ENCODE measurements at regions of chr13 and their contacts with region 1.

Region 1: GRCh38 chr13:75771818-75772217 is 135.7 kb downstream of the LMO7 start:
- DNase-seq: no peak
- ATAC-seq: no peak
- H3K4me3 ChIP-seq: no peak overlapping the region
- H3K4me3 Mint-ChIP-seq: no peak overlapping the region
- H3K27ac ChIP-seq: no peak overlapping the region
- H3K27ac Mint-ChIP-seq: no peak overlapping the region
- H3K4me1 ChIP-seq: peaks cover 0 to 12% of the 10 kb centered on the region in 2 donors
- H3K4me1 Mint-ChIP-seq: peaks cover 6 to 53% (median 38%) of the 10 kb centered on the region in 7 donors
- H3K27me3 ChIP-seq: no peaks in the 10 kb centered on the region
- H3K27me3 Mint-ChIP-seq: no peaks in the 10 kb centered on the region

Region 2: GRCh38 chr13:75566658-75567057 is 205.2 kb before region 1 on chr13:
- CTCF ChIA-PET with region 1: no interaction called
- POLR2A ChIA-PET with region 1: no interaction called
- intact Hi-C with region 1: no loop called
- DNase-seq: no peak
- ATAC-seq: no peak
- H3K4me3 ChIP-seq: no peak overlapping the region
- H3K4me3 Mint-ChIP-seq: no peak overlapping the region
- H3K27ac ChIP-seq: no peak overlapping the region
- H3K27ac Mint-ChIP-seq: no peak overlapping the region
- H3K4me1 ChIP-seq: no peaks in the 10 kb centered on the region
- H3K4me1 Mint-ChIP-seq: peaks cover 0 to 7% (median 4%) of the 10 kb centered on the region in 7 donors
- H3K27me3 ChIP-seq: no peaks in the 10 kb centered on the region
- H3K27me3 Mint-ChIP-seq: no peaks in the 10 kb centered on the region

Region 3: GRCh38 chr13:75788481-75788981 is 16.7 kb after region 1 on chr13:
- CTCF ChIA-PET with region 1: interaction called, 3 read pairs
- POLR2A ChIA-PET with region 1: no interaction called
- intact Hi-C with region 1: loop called in 1 of 2 experiments (anchors 2 kb)
- DNase-seq: no peak
- ATAC-seq: no peak
- H3K4me3 ChIP-seq: no peak overlapping the region
- H3K4me3 Mint-ChIP-seq: no peak overlapping the region
- H3K27ac ChIP-seq: no peak overlapping the region
- H3K27ac Mint-ChIP-seq: no peak overlapping the region
- H3K4me1 ChIP-seq: no peaks in the 10 kb centered on the region
- H3K4me1 Mint-ChIP-seq: peaks cover 0 to 46% (median 29%) of the 10 kb centered on the region in 7 donors
- H3K27me3 ChIP-seq: no peaks in the 10 kb centered on the region
- H3K27me3 Mint-ChIP-seq: no peaks in the 10 kb centered on the region

Region 4: DNA sequence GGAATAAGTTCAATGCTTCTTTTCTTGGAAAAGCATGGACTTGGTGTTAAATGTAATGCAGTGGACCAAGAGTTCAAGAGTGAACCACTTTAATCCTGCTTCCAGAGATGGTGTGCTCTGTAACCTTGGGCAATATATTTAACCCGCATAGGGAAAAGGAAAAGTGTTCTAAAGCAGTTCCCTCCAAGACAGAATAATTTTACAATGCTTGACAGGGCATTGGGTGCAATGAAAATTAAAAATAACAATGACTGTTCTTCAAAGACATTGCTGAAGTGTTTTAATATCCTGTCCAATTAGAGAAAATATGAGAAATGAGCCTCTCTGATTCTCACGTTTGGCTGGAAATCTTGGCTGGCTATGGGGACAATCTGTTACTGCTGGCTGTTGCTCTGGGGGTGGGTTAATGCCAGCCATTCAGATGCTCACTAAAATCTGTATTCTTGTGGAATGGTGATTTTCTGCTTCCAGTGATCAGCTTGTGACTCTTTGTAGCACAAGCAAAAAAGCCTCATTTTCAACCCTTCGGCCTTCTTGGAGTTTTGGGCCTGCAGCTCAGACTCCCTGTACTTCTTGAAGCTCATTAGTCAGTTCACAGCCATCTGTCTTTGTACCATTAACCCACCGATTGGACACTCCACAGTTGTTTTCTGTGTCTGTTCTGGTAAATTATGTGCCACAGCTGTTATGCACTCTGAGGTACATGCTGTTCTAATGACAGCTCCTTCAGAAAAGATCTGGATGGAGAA is 174.9 kb after region 1 on chr13:
- CTCF ChIA-PET with region 1: no interaction called
- POLR2A ChIA-PET with region 1: no interaction called
- intact Hi-C with region 1: no loop called
- DNase-seq: no peak
- ATAC-seq: no peak
- H3K4me3 ChIP-seq: no peak overlapping the region
- H3K4me3 Mint-ChIP-seq: no peak overlapping the region
- H3K27ac ChIP-seq: no peak overlapping the region
- H3K27ac Mint-ChIP-seq: no peak overlapping the region
- H3K4me1 ChIP-seq: no peaks in the 10 kb centered on the region
- H3K4me1 Mint-ChIP-seq: no peaks in the 10 kb centered on the region
- H3K27me3 ChIP-seq: no peaks in the 10 kb centered on the region
- H3K27me3 Mint-ChIP-seq: peaks cover 0 to 18% (median 10%) of the 10 kb centered on the region in 5 donors

Region 5: DNA sequence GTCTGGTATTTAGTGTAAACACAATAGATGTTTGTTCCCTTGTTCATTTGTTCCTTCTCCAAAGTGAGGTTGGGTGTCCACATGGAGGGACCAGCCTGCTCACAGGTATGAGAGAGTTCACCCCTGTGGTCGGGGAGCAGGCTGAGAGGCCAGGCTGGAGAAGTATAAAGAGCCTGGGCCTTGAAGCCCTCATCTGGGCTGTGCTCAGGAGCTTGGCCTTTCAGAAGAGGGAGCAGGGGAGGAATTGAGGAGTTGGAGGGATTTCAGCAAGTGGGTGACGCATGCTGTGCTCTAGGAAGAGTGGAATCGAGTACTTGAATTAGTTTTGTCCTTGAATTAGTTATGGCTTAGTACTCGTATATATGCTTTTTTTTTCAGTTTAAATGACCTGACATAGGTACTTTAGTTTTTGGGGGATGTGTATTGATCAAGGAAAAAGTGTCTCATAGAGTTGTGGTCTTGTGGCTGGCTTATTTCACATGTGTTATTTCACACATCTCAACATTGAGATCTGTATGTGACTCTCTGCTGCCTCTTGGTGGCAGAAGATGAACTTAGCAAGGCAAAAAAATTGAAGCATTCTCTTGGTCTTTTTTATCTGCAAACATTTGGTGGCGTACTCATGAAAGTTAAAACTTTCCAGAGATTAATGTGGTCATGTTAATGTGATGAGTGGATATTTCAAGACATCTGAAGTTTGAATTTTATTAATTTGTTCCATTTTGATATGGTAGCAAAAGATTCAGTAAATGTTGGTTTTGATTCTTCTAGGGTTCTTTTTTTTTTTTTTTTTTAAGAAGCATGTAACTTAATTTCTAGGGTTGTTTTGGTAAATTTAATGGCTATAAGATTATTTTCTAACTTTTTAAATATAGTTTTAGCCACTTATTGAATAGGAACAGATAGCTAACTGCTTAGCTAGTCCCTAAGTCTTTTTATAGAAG is 1980.0 kb after region 1 on chr13:
- CTCF ChIA-PET with region 1: no interaction called
- POLR2A ChIA-PET with region 1: no interaction called
- intact Hi-C with region 1: no loop called
- DNase-seq: peak in 7 of 9 donors; percentile 22 to 63 (median 56)
- ATAC-seq: peak; percentile 86
- H3K4me3 ChIP-seq: no peak overlapping the region
- H3K4me3 Mint-ChIP-seq: no peak overlapping the region
- H3K27ac ChIP-seq: no peak overlapping the region
- H3K27ac Mint-ChIP-seq: peak overlapping the region in 3 of 9 donors; percentile 10 to 77 (median 43)
- H3K4me1 ChIP-seq: peaks cover 0 to 4% of the 10 kb centered on the region in 2 donors
- H3K4me1 Mint-ChIP-seq: peaks cover 9 to 34% (median 18%) of the 10 kb centered on the region in 7 donors
- H3K27me3 ChIP-seq: no peaks in the 10 kb centered on the region
- H3K27me3 Mint-ChIP-seq: no peaks in the 10 kb centered on the region